Sigmoid colon (tissue), 7 donors: ENCODE measurements at regions of chr14 and their contacts with region 1.

Region 1: DNA sequence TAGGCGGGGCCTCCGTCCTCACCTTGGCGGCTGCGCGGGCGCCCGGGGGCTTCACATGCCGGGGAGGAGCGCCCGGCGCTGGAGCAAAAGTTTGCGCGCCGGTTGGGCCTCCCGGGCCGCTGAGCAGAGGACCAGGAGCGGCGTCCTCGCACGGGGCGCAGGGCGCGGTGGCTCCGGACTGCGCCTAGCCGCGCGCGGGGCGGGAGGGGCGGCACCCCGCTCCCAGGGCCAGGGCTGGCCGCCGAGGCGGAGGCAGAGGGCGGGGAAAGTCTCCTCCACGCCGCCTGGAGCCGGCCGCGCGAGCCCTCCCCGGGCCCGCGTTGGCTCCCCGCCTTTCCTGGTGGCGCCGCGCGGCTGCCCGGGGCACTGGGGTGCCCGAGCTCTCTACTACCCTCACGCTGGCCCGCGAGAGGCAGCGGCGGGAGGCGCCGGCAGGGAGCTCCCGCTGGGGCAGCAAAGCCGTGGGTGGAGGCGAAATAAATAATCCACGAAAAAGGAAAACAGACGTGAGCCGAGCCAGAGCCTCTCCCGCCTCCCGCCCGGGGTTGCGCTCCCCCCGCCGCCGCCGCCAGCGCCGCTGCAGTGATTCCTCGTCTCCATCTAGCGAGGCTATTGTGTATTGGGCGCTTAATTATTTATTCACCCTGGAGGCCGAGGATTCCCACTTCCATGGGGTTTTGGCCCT is 400 bp upstream of the PRIMA1 start:
- DNase-seq: peak; percentile 88
- H3K4me3 ChIP-seq: peak overlapping the region; percentile 62 to 80 (median 70)
- H3K27ac ChIP-seq: peak overlapping the region; percentile 76 to 90 (median 90)
- H3K4me1 ChIP-seq: peaks cover 0 to 56% (median 37%) of the 10 kb centered on the region in 4 donors
- H3K27me3 ChIP-seq: no peaks in the 10 kb centered on the region
- CTCF ChIP-seq: peak; percentile 15 to 64 (median 53)
- EP300 ChIP-seq: no peak
- POLR2A ChIP-seq: no peak

Region 2: DNA sequence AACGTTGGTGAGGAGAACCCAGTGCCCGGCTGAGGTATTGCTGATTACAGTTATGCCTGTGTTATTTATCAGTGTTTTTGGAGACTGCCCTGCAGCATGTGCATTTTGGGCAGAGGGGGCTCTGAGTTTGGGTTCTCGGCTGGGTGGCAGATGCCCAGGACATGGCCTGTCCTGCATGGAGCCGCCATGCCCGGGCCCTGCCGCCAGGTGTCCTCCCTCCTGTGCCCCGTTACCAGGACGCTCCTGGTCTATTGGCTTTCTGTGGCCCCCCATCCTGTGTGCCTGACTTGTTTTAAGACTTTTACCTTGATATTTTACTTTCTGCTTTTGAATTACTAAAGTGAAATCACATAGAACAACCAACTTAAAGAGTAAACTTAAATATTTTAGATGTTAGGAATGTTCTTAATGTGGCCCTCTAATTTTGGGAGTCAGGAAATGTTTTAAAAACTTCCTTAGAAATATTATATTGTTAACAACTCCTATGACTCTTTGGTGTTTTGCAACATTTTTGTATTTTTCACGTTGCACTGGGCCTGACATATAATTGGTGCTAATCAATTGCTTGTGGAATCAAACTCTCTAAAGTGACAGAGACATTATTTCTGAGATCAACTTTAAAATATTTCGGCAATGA is 52.2 kb before region 1 on chr14:
- intact Hi-C with region 1: loop called (anchors 2 kb)
- DNase-seq: no peak
- H3K4me3 ChIP-seq: no peak overlapping the region
- H3K27ac ChIP-seq: no peak overlapping the region
- H3K4me1 ChIP-seq: peaks cover 0 to 9% (median 0%) of the 10 kb centered on the region in 4 donors
- H3K27me3 ChIP-seq: no peaks in the 10 kb centered on the region
- CTCF ChIP-seq: peak in 2 of 4 experiments; percentile 30 to 31
- EP300 ChIP-seq: no peak
- POLR2A ChIP-seq: no peak

Region 3: DNA sequence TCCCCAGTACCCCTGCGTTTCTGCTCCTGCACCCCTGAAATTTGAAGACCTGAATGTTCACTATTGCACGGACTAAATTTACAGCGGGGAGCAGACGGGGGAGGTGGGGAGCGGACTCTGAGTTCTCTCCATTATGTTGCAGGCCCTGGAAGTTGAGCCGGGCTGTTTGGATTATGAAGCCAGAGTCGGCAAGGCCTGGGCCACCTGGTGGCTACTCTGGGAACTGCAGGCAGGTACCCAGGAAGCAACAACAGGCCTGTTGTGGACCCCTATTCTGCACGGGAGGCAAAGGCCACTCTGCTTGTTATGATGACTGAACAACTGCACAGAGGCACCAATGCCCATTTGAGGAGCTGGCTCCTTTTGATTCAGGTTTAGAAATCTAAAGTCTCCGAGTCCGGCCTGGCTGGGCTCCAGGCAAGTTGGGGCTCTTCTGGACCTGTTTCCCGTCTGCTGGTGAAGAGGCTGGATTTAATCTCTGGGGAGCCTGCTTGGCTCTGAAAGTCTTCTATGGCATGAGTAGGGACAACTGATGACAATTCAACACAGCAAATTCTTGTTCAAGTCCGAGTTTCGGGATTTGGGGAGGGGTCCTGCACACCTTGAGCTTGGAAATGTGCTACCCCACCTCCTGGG is 104.4 kb after region 1 on chr14:
- intact Hi-C with region 1: loop called (anchors 5 kb)
- DNase-seq: peak; percentile 90
- H3K4me3 ChIP-seq: peak overlapping the region in 1 of 4 donors; percentile 3
- H3K27ac ChIP-seq: peak overlapping the region in 3 of 4 donors; percentile 14 to 29 (median 25)
- H3K4me1 ChIP-seq: peaks cover 0 to 16% (median 7%) of the 10 kb centered on the region in 4 donors
- H3K27me3 ChIP-seq: no peaks in the 10 kb centered on the region
- CTCF ChIP-seq: peak; percentile 91 to 100 (median 96)
- EP300 ChIP-seq: no peak
- POLR2A ChIP-seq: no peak